Activated naive CD4-positive, alpha-beta T cell treated with anti-CD3 and anti-CD28 coated beads, Interleukin-2, amount 10 ng/mL, durations not matched to agents 7 days and 5 days (primary cell): ENCODE measurements at regions of chr11 and their contacts with region 1.

Region 1: DNA sequence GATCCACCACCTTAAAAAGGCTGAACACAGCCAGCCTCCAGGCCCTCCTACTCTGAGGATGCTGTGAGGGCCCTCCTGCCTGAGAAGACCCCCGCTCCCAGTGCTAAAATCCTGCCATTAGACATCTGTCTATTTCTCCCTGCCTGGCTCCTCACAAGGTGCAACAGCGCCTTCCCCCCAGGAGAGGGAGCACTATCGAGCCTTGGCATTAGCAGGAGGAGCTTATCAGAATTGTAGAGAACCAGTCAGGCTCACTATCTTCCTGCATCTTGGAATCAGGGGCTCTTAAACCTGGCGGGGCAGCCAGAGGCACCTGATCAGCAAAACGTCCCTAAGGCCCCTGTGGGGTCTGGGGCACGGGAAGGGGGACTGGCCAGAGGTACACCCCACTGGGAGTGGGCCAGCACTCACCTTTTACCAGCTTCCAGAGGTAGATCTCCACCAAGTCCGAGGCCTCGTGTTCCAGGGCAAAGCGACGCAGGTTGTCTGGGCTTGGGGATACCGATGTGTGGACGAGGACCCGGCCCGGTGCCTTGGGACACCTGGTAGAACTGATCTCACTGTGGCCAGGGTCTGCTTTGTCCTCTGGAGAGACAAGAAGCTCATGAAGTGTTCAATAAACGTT is 28.7 kb downstream of the CHRDL2 start:
- DNase-seq: peak; percentile 75
- H3K4me3 Mint-ChIP-seq: no peak overlapping the region
- H3K27ac Mint-ChIP-seq: no peak overlapping the region
- H3K4me1 Mint-ChIP-seq: peaks cover 2% of the 10 kb centered on the region
- H3K27me3 Mint-ChIP-seq: peaks cover 14% of the 10 kb centered on the region

Region 2: DNA sequence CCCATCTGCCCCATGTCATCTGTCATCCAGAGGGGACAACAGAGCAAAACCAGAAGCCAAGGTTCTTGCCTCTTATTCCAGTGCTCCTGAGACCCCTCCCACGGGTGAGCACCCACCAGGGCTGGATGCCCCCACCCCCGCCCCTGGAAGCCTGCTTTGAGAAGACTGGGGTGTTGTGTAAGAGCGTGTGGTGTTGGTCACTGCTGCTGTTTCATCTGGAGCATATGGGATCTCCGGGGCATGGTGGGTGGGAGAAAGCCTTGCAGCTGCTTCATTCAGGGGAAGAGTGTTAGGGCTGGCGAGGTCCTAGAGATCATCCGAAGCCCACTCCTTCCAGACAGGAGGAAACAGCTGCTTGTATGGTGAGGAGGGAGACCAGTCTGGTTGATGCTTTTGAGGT is 25.4 kb before region 1 on chr11:
- CTCF ChIA-PET with region 1: interaction called, 10 read pairs
- DNase-seq: no peak
- H3K4me3 Mint-ChIP-seq: no peak overlapping the region
- H3K27ac Mint-ChIP-seq: no peak overlapping the region
- H3K4me1 Mint-ChIP-seq: no peaks in the 10 kb centered on the region
- H3K27me3 Mint-ChIP-seq: peaks cover 21% of the 10 kb centered on the region

Region 3: DNA sequence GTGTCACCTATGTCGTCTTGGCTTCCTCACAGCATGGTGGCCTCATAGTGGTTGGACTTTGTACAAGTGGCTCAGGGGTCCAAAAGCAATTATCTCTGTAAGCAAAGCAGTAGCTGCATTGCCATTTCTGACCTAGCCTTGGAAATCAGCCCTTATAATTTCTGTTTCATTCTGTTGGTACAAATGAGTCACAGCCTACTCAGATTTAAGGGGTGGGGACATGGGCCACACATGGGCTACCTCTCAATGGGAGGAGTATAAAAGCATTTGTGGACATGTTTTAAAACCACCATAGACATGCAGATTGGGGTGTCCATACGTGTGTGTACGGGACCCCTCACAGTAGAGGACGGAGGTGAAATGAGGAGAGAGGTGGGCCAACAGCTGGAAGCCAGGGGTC is 12.8 kb before region 1 on chr11:
- CTCF ChIA-PET with region 1: interaction called, 10 read pairs
- DNase-seq: no peak
- H3K4me3 Mint-ChIP-seq: no peak overlapping the region
- H3K27ac Mint-ChIP-seq: no peak overlapping the region
- H3K4me1 Mint-ChIP-seq: no peaks in the 10 kb centered on the region
- H3K27me3 Mint-ChIP-seq: peaks cover 19% of the 10 kb centered on the region

Region 4: DNA sequence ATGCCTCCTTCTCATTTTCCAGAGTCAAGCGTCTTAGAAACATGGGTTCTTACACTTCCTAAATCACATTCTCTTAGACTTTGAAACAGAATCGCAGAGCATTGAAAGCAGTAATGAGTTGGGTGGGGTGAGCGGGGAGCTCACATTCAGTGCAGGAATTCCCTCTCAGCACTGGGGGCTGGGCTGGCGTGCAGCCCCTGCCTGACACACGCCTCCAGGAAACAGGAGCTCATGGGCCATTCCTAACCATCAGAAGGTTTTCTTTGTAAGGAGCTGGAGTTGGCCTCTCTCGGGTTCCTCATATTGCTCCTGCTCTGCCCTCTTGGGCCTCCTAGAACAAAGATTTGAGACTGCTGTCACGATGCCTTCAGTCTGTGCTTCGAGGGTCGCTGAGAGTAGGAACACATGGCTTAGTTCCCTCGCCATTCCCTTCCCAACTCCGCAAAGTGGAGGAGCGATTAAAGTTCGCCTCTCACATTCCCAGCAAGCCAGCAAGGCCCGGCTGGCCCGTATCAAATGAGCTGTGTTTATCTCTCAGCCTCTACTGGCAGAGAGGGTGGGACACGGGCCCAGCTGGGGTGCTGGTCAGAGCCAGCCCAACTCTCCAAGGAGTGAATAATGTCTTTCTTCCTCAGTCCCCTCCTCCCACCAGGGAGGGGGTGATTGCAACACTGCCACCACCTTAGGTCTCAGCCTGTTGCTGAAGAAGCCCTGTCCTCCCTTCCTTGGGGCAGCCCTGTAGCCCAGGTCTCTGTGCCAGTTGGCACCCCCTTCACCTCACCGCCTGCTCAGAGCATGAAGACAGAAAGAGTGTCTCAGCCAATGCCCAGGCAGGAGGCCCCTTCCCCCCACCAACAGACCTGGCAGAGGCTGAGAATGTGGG is 18.3 kb after region 1 on chr11:
- CTCF ChIA-PET with region 1: interaction called, 62 read pairs
- DNase-seq: no peak
- H3K4me3 Mint-ChIP-seq: no peak overlapping the region
- H3K27ac Mint-ChIP-seq: no peak overlapping the region
- H3K4me1 Mint-ChIP-seq: no peaks in the 10 kb centered on the region
- H3K27me3 Mint-ChIP-seq: peaks cover 43% of the 10 kb centered on the region

Region 5: DNA sequence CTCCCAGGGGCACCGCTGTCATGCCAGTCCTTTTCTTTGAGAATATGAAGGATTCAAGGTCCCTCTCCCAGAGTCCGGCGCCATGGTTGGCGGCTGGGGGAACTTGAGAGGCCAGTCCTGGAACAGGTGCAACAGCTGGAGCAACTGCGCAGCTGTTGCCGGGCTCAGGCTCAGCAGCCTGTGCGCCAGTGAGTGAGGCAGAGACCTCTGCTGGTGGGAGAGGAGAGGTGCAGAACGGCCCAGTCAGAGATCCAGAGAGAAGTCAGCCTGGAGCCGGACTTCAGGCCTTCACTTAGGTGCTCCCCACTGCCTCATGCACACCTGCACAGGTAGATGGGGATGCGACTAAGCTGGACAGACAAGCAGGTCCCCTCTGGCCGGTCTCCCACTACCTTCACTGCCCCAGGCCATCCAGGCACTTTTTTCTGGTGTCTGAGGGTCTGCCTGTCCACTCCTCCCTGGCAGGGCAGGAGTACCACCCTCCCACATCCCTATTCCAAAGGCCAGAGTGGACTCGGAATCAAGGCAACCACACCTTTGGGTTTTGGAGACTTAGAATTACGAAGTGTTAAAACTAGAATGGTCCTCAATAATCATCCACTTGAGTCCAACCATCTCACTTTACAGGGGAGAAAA is 24.2 kb after region 1 on chr11:
- CTCF ChIA-PET with region 1: interaction called, 62 read pairs
- DNase-seq: peak; percentile 68
- H3K4me3 Mint-ChIP-seq: no peak overlapping the region
- H3K27ac Mint-ChIP-seq: no peak overlapping the region
- H3K4me1 Mint-ChIP-seq: no peaks in the 10 kb centered on the region
- H3K27me3 Mint-ChIP-seq: peaks cover 84% of the 10 kb centered on the region

Region 6: GRCh38 chr11:74739546-74740270 is 37.2 kb after region 1 on chr11:
- CTCF ChIA-PET with region 1: interaction called, 17 read pairs
- DNase-seq: peak; percentile 54
- H3K4me3 Mint-ChIP-seq: no peak overlapping the region
- H3K27ac Mint-ChIP-seq: no peak overlapping the region
- H3K4me1 Mint-ChIP-seq: no peaks in the 10 kb centered on the region
- H3K27me3 Mint-ChIP-seq: peaks cover 28% of the 10 kb centered on the region

Region 7: GRCh38 chr11:74870485-74870884 is 168.0 kb after region 1 on chr11:
- CTCF ChIA-PET with region 1: interaction called, 12 read pairs
- DNase-seq: no peak
- H3K4me3 Mint-ChIP-seq: no peak overlapping the region
- H3K27ac Mint-ChIP-seq: no peak overlapping the region
- H3K4me1 Mint-ChIP-seq: no peaks in the 10 kb centered on the region
- H3K27me3 Mint-ChIP-seq: no peaks in the 10 kb centered on the region